ENCODE measurements at regions of chr6 and their contacts with region 1.

Region 1: GRCh38 chr6:56708810-56709597 is 66.3 kb upstream of the DST start:
- DNase-seq: no peak
- ATAC-seq: peak; percentile 61 to 72

Region 2: GRCh38 chr6:56556751-56557540 is 152.1 kb before region 1 on chr6:
- intact Hi-C with region 1: no loop called
- DNase-seq: no peak
- ATAC-seq: no peak

Region 3: GRCh38 chr6:56757588-56757984 is 48.6 kb after region 1 on chr6:
- intact Hi-C with region 1: loop called in 1 of 2 experiments (anchors 2 kb)
- DNase-seq: no peak
- ATAC-seq: peak in 1 of 2 donors; percentile 55

Region 4: GRCh38 chr6:56851541-56852259 is 142.7 kb after region 1 on chr6:
- intact Hi-C with region 1: loop called in 1 of 2 experiments (anchors 2 kb)
- DNase-seq: no peak
- ATAC-seq: peak; percentile 91 to 92

Measured in left cardiac atrium (tissue), 4 donors.